Endothelial cell of umbilical vein (primary cell): ENCODE measurements at regions of chr9 and their contacts with region 1.

Region 1: DNA sequence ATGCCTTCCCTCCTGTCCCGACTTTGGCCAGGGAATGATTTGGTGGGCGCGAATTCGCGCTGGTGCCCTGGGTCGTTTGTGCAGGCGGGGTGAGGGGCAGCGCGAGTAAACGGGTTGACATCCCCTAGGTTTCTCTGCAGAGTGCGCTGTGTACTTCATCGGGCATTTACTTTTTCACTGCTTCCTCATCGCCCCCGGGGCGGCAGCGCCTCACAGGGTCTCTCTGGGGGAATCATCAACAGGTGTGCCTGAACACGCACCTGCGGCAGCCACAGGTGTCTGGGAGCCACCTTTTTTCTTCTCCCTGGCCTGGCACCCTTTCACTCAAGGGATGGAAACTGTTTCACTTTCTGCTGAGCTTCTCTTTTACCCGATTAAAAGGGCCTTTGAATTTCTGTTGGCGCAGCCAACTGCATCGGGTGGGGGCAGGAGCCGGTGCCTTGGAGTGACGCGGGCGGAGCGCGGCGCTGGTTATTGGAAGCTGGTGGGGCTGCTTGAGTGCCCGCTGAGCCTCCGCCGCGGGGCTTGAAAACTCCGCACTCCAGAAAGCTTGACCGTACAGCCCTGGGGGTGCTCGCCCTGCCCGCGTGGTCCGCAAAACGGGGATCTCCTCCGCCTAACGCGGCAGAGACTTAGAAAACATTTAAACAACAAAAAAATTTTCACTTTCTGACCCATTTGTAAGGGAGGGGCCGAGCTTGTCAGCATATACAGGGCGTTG is 52.1 kb upstream of the TJP2 start:
- DNase-seq: peak; percentile 81
- H3K4me3 ChIP-seq: peak overlapping the region; percentile 69 to 83 (median 75)
- H3K27ac ChIP-seq: peak overlapping the region; percentile 69
- H3K4me1 ChIP-seq: peaks cover 21% of the 10 kb centered on the region
- H3K27me3 ChIP-seq: no peaks in the 10 kb centered on the region
- CTCF ChIP-seq: no peak
- POLR2A ChIP-seq: no peak

Region 2: GRCh38 chr9:69035438-69036308 is 86.3 kb before region 1 on chr9 and contains the start of gene FXN:
- CTCF ChIA-PET with region 1: interaction called, 3 read pairs
- POLR2A ChIA-PET with region 1: no interaction called
- dilution Hi-C with region 1: no loop called
- intact Hi-C with region 1: loop called (anchors 5 kb)
- DNase-seq: peak; percentile 85
- H3K4me3 ChIP-seq: peak within 1 kb of the TSS; percentile 44 to 81 (median 67)
- H3K27ac ChIP-seq: peak within 1 kb of the TSS; percentile 31
- H3K4me1 ChIP-seq: peaks cover 18% of the 10 kb centered on the region
- H3K27me3 ChIP-seq: no peaks in the 10 kb centered on the region
- CTCF ChIP-seq: peak; percentile 99 to 100
- POLR2A ChIP-seq: peak; percentile 52
- total RNA-seq, gene FXN: 17.1 and 21.2 TPM in 2 replicates

Region 3: GRCh38 chr9:69136779-69137178 is 14.8 kb after region 1 on chr9:
- CTCF ChIA-PET with region 1: interaction called, 13 read pairs
- POLR2A ChIA-PET with region 1: interaction called, 3 read pairs
- dilution Hi-C with region 1: no loop called
- intact Hi-C with region 1: no loop called
- DNase-seq: peak; percentile 49
- H3K4me3 ChIP-seq: no peak overlapping the region
- H3K27ac ChIP-seq: peak overlapping the region; percentile 38
- H3K4me1 ChIP-seq: peaks cover 12% of the 10 kb centered on the region
- H3K27me3 ChIP-seq: no peaks in the 10 kb centered on the region
- CTCF ChIP-seq: no peak
- POLR2A ChIP-seq: no peak

Region 4: DNA sequence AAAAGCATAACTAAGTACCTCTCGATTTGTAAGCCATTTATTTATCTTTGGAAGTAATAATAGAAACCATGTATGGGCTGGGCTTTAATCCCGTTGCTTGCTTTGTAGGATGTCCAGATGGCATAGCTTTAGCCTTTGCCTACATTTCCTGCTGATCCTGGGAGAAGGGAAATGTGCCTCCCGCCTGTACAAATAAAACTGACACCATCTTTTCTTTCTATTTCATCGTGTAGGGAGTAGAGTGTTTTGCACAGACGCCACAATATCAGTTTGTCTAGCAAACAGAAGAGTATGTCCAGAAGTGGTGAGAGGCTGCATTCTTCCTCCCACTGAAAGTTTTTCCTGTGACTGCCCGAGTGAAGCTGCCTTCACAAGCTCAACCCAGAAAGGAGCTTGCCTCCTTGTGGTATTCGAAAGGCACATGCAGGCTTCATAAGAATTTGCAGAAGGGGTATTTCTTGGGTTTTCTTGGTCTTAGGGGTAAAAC is 27.4 kb after region 1 on chr9:
- CTCF ChIA-PET with region 1: interaction called, 19 read pairs
- POLR2A ChIA-PET with region 1: interaction called, 7 read pairs
- dilution Hi-C with region 1: no loop called
- intact Hi-C with region 1: loop called (anchors 1 kb)
- DNase-seq: peak; percentile 96
- H3K4me3 ChIP-seq: peak overlapping the region in 1 of 3 experiments; percentile 45
- H3K27ac ChIP-seq: peak overlapping the region; percentile 51
- H3K4me1 ChIP-seq: peaks cover 22% of the 10 kb centered on the region
- H3K27me3 ChIP-seq: no peaks in the 10 kb centered on the region
- CTCF ChIP-seq: peak; percentile 21 to 49
- POLR2A ChIP-seq: peak; percentile 47

Region 5: GRCh38 chr9:69180670-69181069 is 58.7 kb after region 1 on chr9:
- CTCF ChIA-PET with region 1: interaction called, 15 read pairs
- POLR2A ChIA-PET with region 1: interaction called, 4 read pairs
- dilution Hi-C with region 1: no loop called
- intact Hi-C with region 1: loop called (anchors 1 kb)
- DNase-seq: peak; percentile 98
- H3K4me3 ChIP-seq: peak overlapping the region in 1 of 3 experiments; percentile 36
- H3K27ac ChIP-seq: peak overlapping the region; percentile 98
- H3K4me1 ChIP-seq: peaks cover 51% of the 10 kb centered on the region
- H3K27me3 ChIP-seq: no peaks in the 10 kb centered on the region
- CTCF ChIP-seq: no peak
- POLR2A ChIP-seq: no peak

Region 6: DNA sequence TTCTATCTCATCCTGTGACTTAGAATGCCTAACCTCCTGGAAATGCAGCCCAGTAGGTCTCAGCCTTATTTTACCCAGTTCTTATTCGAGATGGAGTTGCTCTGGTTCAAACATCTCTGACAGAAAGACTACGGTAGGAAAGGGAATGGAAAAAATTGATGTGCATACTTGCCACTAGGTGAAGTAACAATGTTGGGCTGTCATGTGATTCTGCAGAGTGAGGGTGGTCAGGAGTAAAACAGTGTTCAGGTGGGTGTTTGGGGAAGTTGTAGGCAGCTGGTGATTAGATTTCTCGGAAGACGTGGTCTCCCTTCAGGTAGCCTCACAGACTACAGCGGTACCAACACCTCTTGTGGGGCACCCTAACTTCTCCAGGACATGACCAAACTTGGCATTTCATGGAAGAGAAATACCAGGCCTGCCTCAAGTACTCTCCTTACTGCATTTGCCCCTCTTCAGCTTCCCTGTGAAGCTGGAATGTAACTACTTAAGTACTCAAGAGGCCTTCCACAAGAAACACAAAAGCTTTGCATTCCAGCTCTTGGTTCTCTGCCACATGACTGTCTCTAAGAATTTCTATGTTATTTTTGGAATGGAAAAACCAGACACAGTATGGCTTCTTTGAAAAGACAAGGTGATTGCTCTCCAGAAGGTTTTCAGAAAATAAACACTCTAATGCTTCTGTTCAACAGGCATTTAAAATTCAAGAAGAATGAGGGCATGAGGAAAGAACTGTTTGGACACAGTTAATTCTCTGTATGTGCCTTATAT is 185.6 kb after region 1 on chr9:
- CTCF ChIA-PET with region 1: no interaction called
- POLR2A ChIA-PET with region 1: no interaction called
- dilution Hi-C with region 1: no loop called
- intact Hi-C with region 1: no loop called
- DNase-seq: peak; percentile 54
- H3K4me3 ChIP-seq: no peak overlapping the region
- H3K27ac ChIP-seq: no peak overlapping the region
- H3K4me1 ChIP-seq: no peaks in the 10 kb centered on the region
- H3K27me3 ChIP-seq: peaks cover 2 to 7% of the 10 kb centered on the region in 2 experiments
- CTCF ChIP-seq: no peak
- POLR2A ChIP-seq: no peak